ENCODE measurements at regions of chr5 and their contacts with region 1.

Region 1: GRCh38 chr5:138491669-138492559 is 26.6 kb downstream of the EGR1 start:
- DNase-seq: peak; percentile 66 to 87 (median 81)
- ATAC-seq: peak; percentile 99
- H3K4me3 ChIP-seq: peak overlapping the region; percentile 69
- H3K4me3 Mint-ChIP-seq: peak overlapping the region; percentile 76 to 97 (median 92)
- H3K27ac ChIP-seq: peak overlapping the region; percentile 37
- H3K27ac Mint-ChIP-seq: peak overlapping the region in 7 of 9 donors; percentile 40 to 90 (median 67)
- H3K4me1 ChIP-seq: peaks cover 13 to 14% of the 10 kb centered on the region in 2 donors
- H3K4me1 Mint-ChIP-seq: peaks cover 8 to 21% (median 13%) of the 10 kb centered on the region in 7 donors
- H3K27me3 ChIP-seq: peaks cover 0 to 6% of the 10 kb centered on the region in 2 donors
- H3K27me3 Mint-ChIP-seq: peaks cover 0 to 38% (median 5%) of the 10 kb centered on the region in 5 donors

Region 2: GRCh38 chr5:138331449-138332368 is 160.2 kb before region 1 on chr5 and contains the start of gene CDC25C:
- CTCF ChIA-PET with region 1: no interaction called
- POLR2A ChIA-PET with region 1: no interaction called
- intact Hi-C with region 1: loop called in 1 of 2 experiments (anchors 1 kb)
- DNase-seq: peak; percentile 87 to 98 (median 96)
- ATAC-seq: peak; percentile 100
- H3K4me3 ChIP-seq: peak within 1 kb of the TSS; percentile 85
- H3K4me3 Mint-ChIP-seq: peak within 1 kb of the TSS; percentile 83 to 95 (median 86)
- H3K27ac ChIP-seq: peak within 1 kb of the TSS; percentile 49
- H3K27ac Mint-ChIP-seq: peak within 1 kb of the TSS; percentile 48 to 92 (median 68)
- H3K4me1 ChIP-seq: peaks cover 1 to 7% of the 10 kb centered on the region in 2 donors
- H3K4me1 Mint-ChIP-seq: peaks cover 7 to 35% (median 14%) of the 10 kb centered on the region in 7 donors
- H3K27me3 ChIP-seq: no peaks in the 10 kb centered on the region
- H3K27me3 Mint-ChIP-seq: no peaks in the 10 kb centered on the region
- total RNA-seq, gene CDC25C: 9.8 TPM in 1 of 5 experiments, not detected in the others

Region 3: GRCh38 chr5:138663009-138663408 is 171.1 kb after region 1 on chr5:
- CTCF ChIA-PET with region 1: no interaction called
- POLR2A ChIA-PET with region 1: no interaction called
- intact Hi-C with region 1: no loop called
- DNase-seq: peak in 7 of 9 donors; percentile 56 to 75 (median 65)
- ATAC-seq: peak; percentile 86
- H3K4me3 ChIP-seq: no peak overlapping the region
- H3K4me3 Mint-ChIP-seq: peak overlapping the region in 6 of 10 donors; percentile 1 to 60 (median 47)
- H3K27ac ChIP-seq: no peak overlapping the region
- H3K27ac Mint-ChIP-seq: peak overlapping the region in 4 of 9 donors; percentile 2 to 71 (median 18)
- H3K4me1 ChIP-seq: peaks cover 10 to 17% of the 10 kb centered on the region in 2 donors
- H3K4me1 Mint-ChIP-seq: peaks cover 13 to 31% (median 25%) of the 10 kb centered on the region in 7 donors
- H3K27me3 ChIP-seq: peaks cover 0 to 25% of the 10 kb centered on the region in 2 donors
- H3K27me3 Mint-ChIP-seq: peaks cover 87 to 94% (median 89%) of the 10 kb centered on the region in 5 donors